ENCODE measurements at regions of chr5 and their contacts with region 1.

Region 1: GRCh38 chr5:141412854-141413539 is at the start of gene PCDHGA10:
- H3K4me3 Mint-ChIP-seq: peak within 1 kb of the TSS; percentile 66
- H3K27ac Mint-ChIP-seq: no peak within 1 kb of the TSS
- H3K4me1 Mint-ChIP-seq: peaks cover 26% of the 10 kb centered on the region
- H3K27me3 Mint-ChIP-seq: peaks cover 81% of the 10 kb centered on the region

Region 2: GRCh38 chr5:141320225-141321169 is 92.5 kb before region 1 on chr5 and contains the start of gene TAF7:
- intact Hi-C with region 1: loop called (anchors 10 kb)
- H3K4me3 Mint-ChIP-seq: peak within 1 kb of the TSS; percentile 99
- H3K27ac Mint-ChIP-seq: peak within 1 kb of the TSS; percentile 100
- H3K4me1 Mint-ChIP-seq: peaks cover 13% of the 10 kb centered on the region
- H3K27me3 Mint-ChIP-seq: peaks cover 6% of the 10 kb centered on the region

Region 3: DNA sequence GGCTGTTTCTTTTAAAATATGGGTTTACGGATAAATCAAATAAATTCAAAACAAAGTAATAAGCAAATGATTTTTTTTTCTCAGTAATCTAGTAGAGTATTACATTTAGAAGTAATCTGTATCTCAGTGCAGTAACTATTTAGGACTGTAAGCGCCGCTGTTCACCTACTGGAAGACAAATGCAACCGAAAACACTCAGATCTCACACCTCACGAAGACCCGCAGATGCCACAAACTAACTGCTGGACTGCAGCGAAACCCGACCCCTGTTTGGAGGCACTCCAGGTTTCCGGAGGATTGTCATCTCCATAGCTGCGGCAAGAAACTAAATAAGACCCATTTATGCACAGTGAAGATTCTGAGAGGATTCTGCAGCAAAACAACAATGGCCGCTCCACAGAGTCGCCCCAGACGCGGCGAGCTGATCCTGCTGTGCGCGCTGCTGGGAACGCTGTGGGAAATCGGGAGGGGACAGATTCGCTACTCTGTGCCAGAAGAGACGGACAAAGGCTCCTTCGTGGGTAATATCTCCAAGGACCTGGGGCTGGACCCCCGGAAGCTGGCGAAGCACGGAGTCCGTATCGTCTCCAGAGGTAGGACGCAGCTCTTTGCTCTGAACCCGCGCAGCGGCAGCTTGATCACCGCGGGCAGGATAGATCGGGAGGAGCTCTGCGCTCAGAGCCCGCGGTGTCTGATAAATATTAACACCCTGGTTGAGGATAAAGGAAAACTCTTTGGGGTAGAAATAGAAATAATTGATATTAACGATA is 20.4 kb before region 1 on chr5 and contains the start of gene PCDHGA8:
- intact Hi-C with region 1: no loop called
- H3K4me3 Mint-ChIP-seq: no peak within 1 kb of the TSS
- H3K27ac Mint-ChIP-seq: no peak within 1 kb of the TSS
- H3K4me1 Mint-ChIP-seq: no peaks in the 10 kb centered on the region
- H3K27me3 Mint-ChIP-seq: peaks cover 72% of the 10 kb centered on the region

Region 4: DNA sequence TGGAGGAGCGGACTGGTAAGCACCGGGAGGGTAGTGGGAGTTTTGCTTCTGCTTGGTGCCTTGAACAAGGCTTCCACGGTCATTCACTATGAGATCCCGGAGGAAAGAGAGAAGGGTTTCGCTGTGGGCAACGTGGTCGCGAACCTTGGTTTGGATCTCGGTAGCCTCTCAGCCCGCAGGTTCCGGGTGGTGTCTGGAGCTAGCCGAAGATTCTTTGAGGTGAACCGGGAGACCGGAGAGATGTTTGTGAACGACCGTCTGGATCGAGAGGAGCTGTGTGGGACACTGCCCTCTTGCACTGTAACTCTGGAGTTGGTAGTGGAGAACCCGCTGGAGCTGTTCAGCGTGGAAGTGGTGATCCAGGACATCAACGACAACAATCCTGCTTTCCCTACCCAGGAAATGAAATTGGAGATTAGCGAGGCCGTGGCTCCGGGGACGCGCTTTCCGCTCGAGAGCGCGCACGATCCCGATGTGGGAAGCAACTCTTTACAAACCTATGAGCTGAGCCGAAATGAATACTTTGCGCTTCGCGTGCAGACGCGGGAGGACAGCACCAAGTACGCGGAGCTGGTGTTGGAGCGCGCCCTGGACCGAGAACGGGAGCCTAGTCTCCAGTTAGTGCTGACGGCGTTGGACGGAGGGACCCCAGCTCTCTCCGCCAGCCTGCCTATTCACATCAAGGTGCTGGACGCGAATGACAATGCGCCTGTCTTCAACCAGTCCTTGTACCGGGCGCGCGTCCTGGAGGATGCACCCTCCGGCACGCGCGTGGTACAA is 63.3 kb after region 1 on chr5:
- intact Hi-C with region 1: no loop called
- H3K4me3 Mint-ChIP-seq: peak overlapping the region; percentile 75
- H3K27ac Mint-ChIP-seq: no peak overlapping the region
- H3K4me1 Mint-ChIP-seq: peaks cover 23% of the 10 kb centered on the region
- H3K27me3 Mint-ChIP-seq: peaks cover 65% of the 10 kb centered on the region

Region 5: DNA sequence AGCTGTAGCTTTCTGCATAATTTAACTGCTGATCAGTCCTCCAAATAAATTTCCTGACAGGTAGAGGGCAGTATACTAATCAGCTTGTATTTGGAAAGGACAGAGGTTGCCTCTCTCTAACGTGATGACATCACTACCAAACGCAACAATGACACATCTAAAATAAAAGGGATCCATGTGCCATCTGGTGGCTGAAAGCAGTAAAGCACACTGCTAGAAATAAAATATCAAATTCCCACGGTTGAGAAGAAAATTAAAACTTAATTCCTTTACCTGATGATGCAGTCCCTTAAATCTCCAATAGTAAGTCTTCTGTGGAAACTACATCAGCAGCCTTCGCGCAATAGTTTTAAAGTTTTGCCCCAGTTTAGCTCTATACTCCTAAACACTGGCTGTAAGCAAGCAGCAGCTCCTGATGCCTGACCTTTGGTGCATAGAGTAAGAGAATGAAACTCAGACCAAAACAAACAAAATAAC is 151.3 kb after region 1 on chr5:
- intact Hi-C with region 1: loop called (anchors 2 kb)
- H3K4me3 Mint-ChIP-seq: no peak overlapping the region
- H3K27ac Mint-ChIP-seq: no peak overlapping the region
- H3K4me1 Mint-ChIP-seq: peaks cover 16% of the 10 kb centered on the region
- H3K27me3 Mint-ChIP-seq: no peaks in the 10 kb centered on the region